Activated T-helper 1 cell treated with anti-CD3 and anti-CD28 coated beads, Interleukin-12 subunit alpha, Interleukin-12 subunit beta, Interleukin-2, Interleukin-4 antibody, amounts not matched to agents 30 ng/mL and 10 ng/mL and 1 ng/mL, durations not matched to agents 14 hours and 24 hours and 36 hours (primary cell): ENCODE measurements at regions of chr2 and their contacts with region 1.

Region 1: DNA sequence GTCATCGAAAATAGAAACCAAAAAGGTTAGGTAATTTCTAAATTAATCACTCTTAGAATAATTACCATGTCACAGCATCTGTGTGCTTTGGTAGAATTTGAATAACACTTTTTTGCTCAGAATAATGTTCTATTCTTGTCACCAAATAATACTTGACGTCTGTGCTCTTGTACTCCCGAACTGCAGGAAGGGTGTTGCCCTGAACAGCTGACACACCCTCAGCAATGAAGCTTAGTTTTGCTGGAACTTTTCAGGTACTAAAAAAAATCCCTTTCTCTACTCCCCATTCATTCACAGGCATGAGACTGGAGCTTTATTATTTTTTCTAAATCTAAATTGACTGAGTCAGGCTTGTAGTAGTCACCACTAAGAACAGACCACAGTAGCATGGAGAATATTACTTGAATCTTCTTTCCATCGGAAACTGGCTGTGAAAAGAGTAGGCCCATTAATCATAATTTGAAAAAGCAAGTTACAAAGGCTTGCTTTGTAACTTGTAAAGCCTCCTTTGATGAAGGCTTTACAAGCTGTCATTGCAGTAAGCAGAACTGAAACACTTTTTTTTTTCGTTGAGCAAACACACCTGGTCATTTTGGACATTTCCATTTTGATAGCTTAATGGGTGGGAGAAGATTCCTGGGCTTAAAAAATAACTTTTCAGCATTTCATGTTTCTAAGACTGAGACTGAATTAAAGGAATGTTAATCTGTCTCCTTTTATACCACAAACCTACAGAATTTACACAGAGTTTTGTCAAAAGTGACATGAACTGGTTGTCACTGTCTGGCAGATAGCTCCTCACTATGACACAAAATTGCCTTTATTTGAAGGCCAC is 70.3 kb upstream of the PELI1 start:
- DNase-seq: peak; percentile 33
- H3K4me3 Mint-ChIP-seq: peak overlapping the region; percentile 58
- H3K27ac Mint-ChIP-seq: peak overlapping the region; percentile 98
- H3K4me1 Mint-ChIP-seq: peaks cover 66% of the 10 kb centered on the region
- H3K27me3 Mint-ChIP-seq: no peaks in the 10 kb centered on the region

Region 2: GRCh38 chr2:63977904-63978303 is 236.6 kb before region 1 on chr2:
- intact Hi-C with region 1: loop called (anchors 5 kb)
- DNase-seq: peak; percentile 23
- H3K4me3 Mint-ChIP-seq: peak overlapping the region; percentile 37
- H3K27ac Mint-ChIP-seq: peak overlapping the region; percentile 77
- H3K4me1 Mint-ChIP-seq: peaks cover 13% of the 10 kb centered on the region
- H3K27me3 Mint-ChIP-seq: no peaks in the 10 kb centered on the region

Region 3: DNA sequence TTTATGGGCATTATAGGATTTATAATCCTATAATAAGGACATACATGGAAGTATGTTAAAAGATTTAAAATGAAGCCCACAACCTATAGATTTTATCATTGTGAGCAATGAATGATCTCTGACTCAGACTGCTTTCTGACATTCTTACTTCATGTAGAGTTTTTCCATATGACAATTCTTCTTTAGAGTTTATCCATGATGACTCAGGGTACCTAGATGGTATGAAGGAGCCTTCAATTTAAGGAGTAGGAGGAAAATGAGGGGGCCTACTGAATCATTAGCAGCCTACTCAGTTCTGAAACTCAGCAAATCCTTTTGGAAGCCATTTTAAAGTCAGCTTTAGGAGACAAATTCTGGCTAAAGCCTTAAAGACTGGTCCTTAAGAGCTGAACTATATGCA is 80.7 kb before region 1 on chr2:
- intact Hi-C with region 1: loop called (anchors 1 kb)
- DNase-seq: no peak
- H3K4me3 Mint-ChIP-seq: peak overlapping the region; percentile 39
- H3K27ac Mint-ChIP-seq: peak overlapping the region; percentile 88
- H3K4me1 Mint-ChIP-seq: peaks cover 90% of the 10 kb centered on the region
- H3K27me3 Mint-ChIP-seq: no peaks in the 10 kb centered on the region

Region 4: GRCh38 chr2:64228126-64228678 is 13.7 kb after region 1 on chr2:
- intact Hi-C with region 1: loop called (anchors 1 kb)
- DNase-seq: peak; percentile 54
- H3K4me3 Mint-ChIP-seq: peak overlapping the region; percentile 80
- H3K27ac Mint-ChIP-seq: peak overlapping the region; percentile 86
- H3K4me1 Mint-ChIP-seq: peaks cover 44% of the 10 kb centered on the region
- H3K27me3 Mint-ChIP-seq: peaks cover 7% of the 10 kb centered on the region

Region 5: GRCh38 chr2:64318476-64318748 is 103.9 kb after region 1 on chr2:
- intact Hi-C with region 1: no loop called
- DNase-seq: no peak
- H3K4me3 Mint-ChIP-seq: no peak overlapping the region
- H3K27ac Mint-ChIP-seq: no peak overlapping the region
- H3K4me1 Mint-ChIP-seq: peaks cover 19% of the 10 kb centered on the region
- H3K27me3 Mint-ChIP-seq: peaks cover 30% of the 10 kb centered on the region

Region 6: DNA sequence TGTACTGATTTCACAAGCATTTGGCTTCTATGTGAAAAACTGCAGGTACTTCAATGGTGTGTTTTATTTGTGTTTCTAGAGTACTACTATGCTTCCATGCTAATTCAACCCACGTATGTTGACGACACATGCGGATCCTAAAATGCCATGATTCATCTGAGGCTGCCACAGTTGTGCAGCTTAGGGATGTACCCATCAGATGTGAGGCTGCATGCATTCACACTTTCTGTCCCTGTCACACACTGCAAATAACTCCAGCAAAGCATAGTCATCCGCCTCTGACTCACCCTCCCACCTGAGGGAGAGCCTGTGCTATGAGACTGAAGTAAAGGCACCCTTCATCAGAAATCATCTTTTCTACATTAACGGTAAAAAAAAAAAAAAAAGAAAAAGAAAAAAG is 461.4 kb after region 1 on chr2:
- intact Hi-C with region 1: loop called (anchors 5 kb)
- DNase-seq: peak; percentile 30
- H3K4me3 Mint-ChIP-seq: no peak overlapping the region
- H3K27ac Mint-ChIP-seq: peak overlapping the region; percentile 56
- H3K4me1 Mint-ChIP-seq: peaks cover 48% of the 10 kb centered on the region
- H3K27me3 Mint-ChIP-seq: no peaks in the 10 kb centered on the region

Region 7: DNA sequence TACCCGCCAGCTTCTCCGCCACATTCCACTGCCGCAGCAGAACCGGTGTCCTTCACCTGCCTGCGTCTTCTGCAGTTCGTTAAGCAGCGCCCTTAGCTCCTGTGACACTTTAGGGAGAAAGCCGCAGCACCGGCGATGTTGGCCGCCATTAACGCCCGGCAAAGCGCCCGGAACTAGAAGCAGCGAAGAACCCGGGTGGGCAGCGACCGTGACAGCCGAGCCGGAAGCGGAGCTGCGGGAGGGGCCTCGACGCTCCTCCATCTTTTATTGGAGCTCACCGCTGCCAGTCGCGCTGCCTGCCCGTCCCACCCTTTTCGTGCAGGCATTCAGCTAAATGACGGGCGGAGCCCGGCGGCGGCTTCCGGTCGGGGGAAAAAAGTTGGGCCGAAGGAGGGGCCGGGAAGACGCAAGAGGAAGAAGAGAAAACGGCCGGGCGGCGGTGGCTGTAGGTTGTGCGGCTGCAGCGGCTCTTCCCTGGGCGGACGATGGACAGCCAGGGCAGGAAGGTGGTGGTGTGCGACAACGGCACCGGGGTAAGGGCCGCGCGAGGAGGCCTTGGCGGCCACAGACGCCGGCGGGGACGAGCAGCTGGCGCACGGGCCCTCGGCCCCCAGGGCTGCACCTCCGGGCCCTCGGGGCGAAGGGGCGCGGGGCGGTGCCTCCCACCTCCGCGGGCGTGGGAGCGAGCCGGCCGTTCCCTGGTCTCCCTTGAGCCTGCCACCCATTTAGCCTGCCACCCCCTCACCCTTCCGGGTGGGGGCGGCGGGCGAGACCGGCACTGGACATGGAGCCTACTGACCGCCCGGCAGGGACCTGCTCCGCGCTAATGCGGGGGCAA is 1013.1 kb after region 1 on chr2 and contains the start of gene ACTR2:
- intact Hi-C with region 1: loop called (anchors 5 kb)
- DNase-seq: peak; percentile 95
- H3K4me3 Mint-ChIP-seq: peak within 1 kb of the TSS; percentile 98
- H3K27ac Mint-ChIP-seq: peak within 1 kb of the TSS; percentile 99
- H3K4me1 Mint-ChIP-seq: peaks cover 36% of the 10 kb centered on the region
- H3K27me3 Mint-ChIP-seq: no peaks in the 10 kb centered on the region
- total RNA-seq, gene ACTR2: 285 and 295 TPM in 2 replicates